Left cardiac atrium (tissue), 4 donors: ENCODE measurements at regions of chr20 and their contacts with region 1.

Region 1: DNA sequence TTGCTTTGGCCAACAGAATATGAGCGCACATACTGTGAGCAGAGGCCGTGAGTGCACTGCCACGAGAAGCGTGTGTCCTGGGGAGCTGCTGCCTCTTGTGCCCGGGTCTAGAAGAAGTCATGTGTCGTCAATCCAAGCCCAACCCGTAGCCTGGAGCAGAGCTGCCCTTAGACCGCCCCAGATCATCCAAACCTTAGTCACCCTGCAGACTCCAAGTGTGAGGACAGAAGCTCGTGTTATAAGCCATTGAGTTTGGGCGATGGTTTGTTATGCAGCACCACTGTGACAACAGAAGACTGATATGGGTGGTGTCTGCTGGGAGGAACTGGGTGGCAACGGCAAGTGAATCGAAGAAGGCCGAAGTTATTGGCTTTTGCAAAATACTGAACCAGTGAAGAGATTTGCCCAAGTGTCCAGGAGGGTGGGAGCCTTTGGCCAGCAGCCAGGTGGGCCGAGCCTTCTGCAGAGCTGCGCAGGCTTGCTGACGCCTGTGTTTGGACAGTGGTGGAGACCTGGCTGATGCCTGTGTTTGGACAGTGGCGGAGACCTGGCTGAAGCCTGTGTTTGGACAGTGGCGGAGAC is 101.3 kb upstream of the SULF2 start:
- DNase-seq: no peak
- ATAC-seq: no peak

Region 2: GRCh38 chr20:47847868-47848531 is 38.6 kb before region 1 on chr20:
- intact Hi-C with region 1: loop called in 1 of 2 experiments (anchors 10 kb)
- DNase-seq: no peak
- ATAC-seq: no peak

Region 3: GRCh38 chr20:48523212-48523941 is 636.8 kb after region 1 on chr20:
- intact Hi-C with region 1: loop called (anchors 10 kb)
- DNase-seq: no peak
- ATAC-seq: peak; percentile 55 to 65